ENCODE measurements at regions of chr20 and their contacts with region 1.

Region 1: GRCh38 chr20:19828232-19828631 is 70.2 kb downstream of the RIN2 start:
- DNase-seq: peak; percentile 68
- ATAC-seq: peak; percentile 98
- H3K4me3 ChIP-seq: no peak overlapping the region
- H3K27ac ChIP-seq: no peak overlapping the region
- H3K4me1 ChIP-seq: peaks cover 10% of the 10 kb centered on the region
- H3K27me3 ChIP-seq: no peaks in the 10 kb centered on the region; a peak in 1 of 4 replicates
- CTCF ChIP-seq: peak; percentile 15 to 51 (median 42); a peak in 4 of 6 replicates
- EP300 ChIP-seq: peak; percentile 33 to 53; a peak in 2 of 4 replicates
- POLR2A ChIP-seq: no peak
- RAD21 ChIP-seq: peak; percentile 39

Region 2: GRCh38 chr20:19317237-19318069 is 510.8 kb before region 1 on chr20:
- CTCF ChIA-PET with region 1: no interaction called
- POLR2A ChIA-PET with region 1: no interaction called
- RAD21 ChIA-PET with region 1: no interaction called
- SMC1A ChIA-PET with region 1: no interaction called
- in situ Hi-C with region 1: no loop called
- intact Hi-C with region 1: no loop called
- DNase-seq: no peak
- ATAC-seq: peak; percentile 75
- H3K4me3 ChIP-seq: no peak overlapping the region
- H3K27ac ChIP-seq: no peak overlapping the region
- H3K4me1 ChIP-seq: no peaks in the 10 kb centered on the region
- H3K27me3 ChIP-seq: no peaks in the 10 kb centered on the region; a peak in 2 of 4 replicates
- CTCF ChIP-seq: no peak
- EP300 ChIP-seq: no peak
- POLR2A ChIP-seq: no peak
- RAD21 ChIP-seq: no peak

Region 3: DNA sequence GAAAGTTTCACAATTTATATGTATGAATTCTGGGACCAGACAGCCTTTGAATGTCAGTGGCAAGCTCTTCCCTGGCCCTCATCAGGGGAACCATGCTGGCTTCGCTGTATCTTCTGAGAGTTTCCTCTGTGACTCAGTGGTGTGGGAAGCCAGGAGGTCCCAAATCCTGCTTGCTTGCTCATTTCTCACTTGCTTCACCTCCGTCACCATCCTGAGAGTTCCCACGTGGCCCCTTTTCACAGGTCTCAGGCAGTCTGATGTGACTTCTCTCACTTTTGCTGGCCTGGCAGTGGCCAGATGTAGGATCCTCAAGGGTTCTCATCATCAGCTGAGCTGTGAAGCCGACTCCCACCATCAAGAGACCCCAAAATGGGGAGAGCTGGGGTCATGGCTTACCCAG is 98.6 kb before region 1 on chr20:
- CTCF ChIA-PET with region 1: no interaction called
- POLR2A ChIA-PET with region 1: no interaction called
- RAD21 ChIA-PET with region 1: no interaction called
- SMC1A ChIA-PET with region 1: no interaction called
- in situ Hi-C with region 1: no loop called
- intact Hi-C with region 1: no loop called
- DNase-seq: no peak
- ATAC-seq: no peak
- H3K4me3 ChIP-seq: no peak overlapping the region
- H3K27ac ChIP-seq: no peak overlapping the region
- H3K4me1 ChIP-seq: no peaks in the 10 kb centered on the region; the same call in 1 of the 2 replicates
- H3K27me3 ChIP-seq: no peaks in the 10 kb centered on the region
- CTCF ChIP-seq: no peak
- EP300 ChIP-seq: no peak
- POLR2A ChIP-seq: no peak
- RAD21 ChIP-seq: no peak

Region 4: DNA sequence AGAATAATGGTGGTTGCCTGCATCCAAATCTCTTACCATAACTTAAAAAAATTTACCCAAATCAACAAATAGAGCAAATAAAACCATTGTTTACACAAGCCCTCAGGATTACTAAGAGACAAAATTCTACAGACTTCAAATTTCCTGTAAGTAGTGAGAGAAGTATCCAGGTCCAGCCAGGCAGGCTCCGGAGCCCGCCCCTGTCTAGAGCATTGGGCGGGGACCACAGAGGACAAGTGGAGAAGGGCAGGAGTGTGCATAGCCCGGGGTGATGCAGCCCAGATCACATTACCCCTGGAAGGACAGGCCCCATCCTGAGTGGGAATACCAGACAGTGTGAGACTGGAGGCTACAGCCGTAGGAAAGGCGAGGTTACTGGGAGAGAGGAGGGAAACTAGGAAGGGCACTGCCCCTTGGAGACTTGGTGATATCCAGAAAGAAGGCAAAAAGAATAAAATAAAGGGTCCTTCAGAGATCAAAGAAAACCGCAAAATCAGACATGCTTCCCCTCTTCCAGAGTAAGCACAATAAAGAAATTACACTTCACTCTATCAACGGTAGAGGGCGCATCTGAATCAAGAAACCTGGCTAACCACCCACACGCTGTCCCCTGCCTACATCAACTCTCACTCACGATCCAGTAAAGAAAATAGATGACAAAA is 43.6 kb before region 1 on chr20:
- CTCF ChIA-PET with region 1: interaction called, 89 read pairs
- POLR2A ChIA-PET with region 1: no interaction called
- RAD21 ChIA-PET with region 1: interaction called, 27 read pairs
- SMC1A ChIA-PET with region 1: interaction called, 50 read pairs
- in situ Hi-C with region 1: no loop called
- intact Hi-C with region 1: loop called (anchors 5 kb)
- DNase-seq: peak; percentile 9
- ATAC-seq: peak; percentile 88
- H3K4me3 ChIP-seq: no peak overlapping the region
- H3K27ac ChIP-seq: no peak overlapping the region
- H3K4me1 ChIP-seq: peaks cover 12% of the 10 kb centered on the region; the same call in 1 of the 2 replicates
- H3K27me3 ChIP-seq: no peaks in the 10 kb centered on the region
- CTCF ChIP-seq: peak; percentile 61 to 71 (median 64)
- EP300 ChIP-seq: no peak
- POLR2A ChIP-seq: no peak
- RAD21 ChIP-seq: peak; percentile 85

Region 5: GRCh38 chr20:19815553-19815991 is 12.7 kb before region 1 on chr20:
- CTCF ChIA-PET with region 1: interaction called, 24 read pairs
- POLR2A ChIA-PET with region 1: interaction called, 3 read pairs
- RAD21 ChIA-PET with region 1: interaction called, 32 read pairs
- SMC1A ChIA-PET with region 1: interaction called, 42 read pairs
- in situ Hi-C with region 1: no loop called
- intact Hi-C with region 1: no loop called
- DNase-seq: no peak
- ATAC-seq: peak; percentile 87
- H3K4me3 ChIP-seq: no peak overlapping the region
- H3K27ac ChIP-seq: no peak overlapping the region
- H3K4me1 ChIP-seq: no peaks in the 10 kb centered on the region
- H3K27me3 ChIP-seq: peaks cover 0 to 2% of the 10 kb centered on the region in 2 experiments; a peak in 1 of 4 replicates
- CTCF ChIP-seq: no peak
- EP300 ChIP-seq: no peak
- POLR2A ChIP-seq: no peak
- RAD21 ChIP-seq: no peak

Region 6: DNA sequence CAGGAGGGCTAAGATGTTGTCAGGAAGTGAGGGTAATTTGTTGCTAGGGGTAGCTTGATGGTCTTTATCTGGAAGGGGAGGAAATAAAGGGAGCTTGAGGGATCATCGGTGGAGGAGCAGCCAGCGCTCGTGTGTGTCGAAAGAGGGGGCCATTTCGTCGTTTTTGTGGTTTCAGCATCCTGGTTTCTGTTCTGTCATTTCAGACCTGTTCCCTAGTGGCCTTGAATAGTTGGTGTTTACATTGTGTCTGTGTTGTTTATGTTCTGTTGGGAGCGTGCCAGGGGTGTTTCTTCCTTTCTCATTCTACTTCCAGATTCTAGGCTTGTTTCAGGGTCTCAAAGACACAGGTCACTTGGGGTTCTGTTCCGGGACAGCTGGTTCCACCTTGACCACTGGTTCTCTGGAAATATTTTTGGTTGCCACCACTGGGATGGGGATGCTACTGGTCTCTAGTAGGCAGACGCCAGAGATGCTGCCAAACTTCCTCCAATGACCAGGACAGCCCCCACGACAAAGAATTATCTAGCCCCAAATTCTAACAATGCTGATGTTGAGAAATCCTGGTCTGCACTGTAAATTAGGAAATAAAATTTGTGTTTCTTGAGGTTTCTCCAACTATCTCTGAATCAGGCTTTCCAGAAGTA is 75.1 kb after region 1 on chr20:
- CTCF ChIA-PET with region 1: interaction called, 13 read pairs
- POLR2A ChIA-PET with region 1: no interaction called
- RAD21 ChIA-PET with region 1: interaction called, 9 read pairs
- SMC1A ChIA-PET with region 1: interaction called, 5 read pairs
- in situ Hi-C with region 1: no loop called
- intact Hi-C with region 1: no loop called
- DNase-seq: no peak
- ATAC-seq: peak; percentile 94
- H3K4me3 ChIP-seq: no peak overlapping the region
- H3K27ac ChIP-seq: no peak overlapping the region
- H3K4me1 ChIP-seq: no peaks in the 10 kb centered on the region
- H3K27me3 ChIP-seq: no peaks in the 10 kb centered on the region
- CTCF ChIP-seq: peak; percentile 42 to 85 (median 59); a peak in 5 of 6 replicates
- EP300 ChIP-seq: no peak; a peak in 1 of 4 replicates
- POLR2A ChIP-seq: no peak
- RAD21 ChIP-seq: peak; percentile 84

Region 7: GRCh38 chr20:20452254-20452676 is 624.0 kb after region 1 on chr20:
- CTCF ChIA-PET with region 1: no interaction called
- POLR2A ChIA-PET with region 1: no interaction called
- RAD21 ChIA-PET with region 1: no interaction called
- SMC1A ChIA-PET with region 1: no interaction called
- in situ Hi-C with region 1: no loop called
- intact Hi-C with region 1: loop called (anchors 10 kb)
- DNase-seq: peak; percentile 63
- ATAC-seq: peak; percentile 95
- H3K4me3 ChIP-seq: peak overlapping the region; percentile 54; the same call in 1 of the 2 replicates
- H3K27ac ChIP-seq: peak overlapping the region; percentile 73
- H3K4me1 ChIP-seq: peaks cover 25% of the 10 kb centered on the region
- H3K27me3 ChIP-seq: no peaks in the 10 kb centered on the region
- CTCF ChIP-seq: peak in 1 of 3 experiments; percentile 4; a peak in 1 of 6 replicates
- EP300 ChIP-seq: 0 out of 4 replicates have a peak, but pooled peaks of 1 of the 2 experiments have one; percentile 12
- POLR2A ChIP-seq: peak; percentile 72
- RAD21 ChIP-seq: 0 out of 2 replicates have a peak, but pooled peaks have one; percentile 2